Prostate gland (tissue), 2 donors: ENCODE measurements at regions of chrX and their contacts with region 1.

Region 1: DNA sequence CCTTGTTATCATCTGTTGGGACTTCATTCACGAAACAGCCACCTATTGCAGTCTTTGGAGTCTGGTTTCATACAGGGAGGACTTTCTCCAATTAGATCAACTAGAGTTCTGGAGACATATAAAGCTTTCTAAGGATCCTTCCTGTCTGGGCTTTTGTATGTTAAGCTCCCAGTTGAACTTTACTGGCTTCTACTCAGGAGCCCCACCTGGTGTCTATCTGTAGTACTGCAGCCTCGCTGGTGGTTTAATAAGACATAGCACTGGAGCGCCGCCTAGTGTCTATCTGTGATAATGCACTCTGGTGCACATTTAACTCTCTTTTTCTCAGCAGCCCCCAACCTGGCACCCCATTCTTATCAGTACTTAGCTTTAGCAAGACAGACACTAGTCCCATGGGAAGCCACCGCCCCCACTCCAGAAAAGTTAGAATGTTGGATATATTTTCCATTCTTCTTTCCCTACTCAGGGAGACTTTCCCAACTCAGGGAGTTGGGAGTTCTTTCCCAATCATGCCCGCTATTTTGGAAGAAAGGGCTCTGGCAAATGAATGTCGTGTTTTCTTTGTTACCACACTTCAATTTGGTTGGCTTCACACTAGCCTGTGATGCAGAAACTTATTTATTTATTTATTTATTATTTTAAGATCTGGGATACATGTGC is 36.9 kb upstream of the SYTL4 start:
- DNase-seq: peak; percentile 70
- H3K4me3 ChIP-seq: no peak overlapping the region
- H3K27ac ChIP-seq: no peak overlapping the region
- H3K4me1 ChIP-seq: no peaks in the 10 kb centered on the region
- H3K27me3 ChIP-seq: no peaks in the 10 kb centered on the region
- CTCF ChIP-seq: peak; percentile 81 to 99 (median 98)
- POLR2A ChIP-seq: peak; percentile 17

Region 2: GRCh38 chrX:100512471-100512870 is 256.3 kb before region 1 on chrX:
- intact Hi-C with region 1: loop called (anchors 10 kb)
- DNase-seq: no peak
- H3K4me3 ChIP-seq: no peak overlapping the region
- H3K27ac ChIP-seq: no peak overlapping the region
- H3K4me1 ChIP-seq: no peaks in the 10 kb centered on the region
- H3K27me3 ChIP-seq: no peaks in the 10 kb centered on the region
- CTCF ChIP-seq: peak in 2 of 4 experiments; percentile 42 to 55
- POLR2A ChIP-seq: no peak

Region 3: DNA sequence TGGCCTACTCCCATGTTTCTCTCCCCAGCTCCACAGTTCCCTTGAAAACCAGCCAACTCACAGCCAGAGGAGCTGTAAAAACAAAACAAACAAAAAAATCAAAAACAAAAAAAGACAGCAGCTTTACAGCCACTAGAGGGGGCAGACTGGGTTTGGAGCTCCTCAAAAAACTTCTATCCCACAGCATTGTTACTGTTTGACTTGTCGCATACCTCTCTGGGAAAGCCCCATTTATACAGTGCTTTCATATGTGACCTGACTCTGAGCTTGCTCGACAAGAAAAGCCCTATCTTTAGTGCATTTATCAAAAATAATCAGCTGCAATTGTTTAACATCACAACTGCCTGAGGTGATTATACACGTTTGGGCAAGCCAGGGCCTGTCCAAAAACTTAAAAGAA is 153.8 kb before region 1 on chrX:
- intact Hi-C with region 1: no loop called
- DNase-seq: peak; percentile 4
- H3K4me3 ChIP-seq: no peak overlapping the region
- H3K27ac ChIP-seq: no peak overlapping the region
- H3K4me1 ChIP-seq: no peaks in the 10 kb centered on the region
- H3K27me3 ChIP-seq: no peaks in the 10 kb centered on the region
- CTCF ChIP-seq: peak in 2 of 4 experiments; percentile 23 to 31
- POLR2A ChIP-seq: no peak

Region 4: DNA sequence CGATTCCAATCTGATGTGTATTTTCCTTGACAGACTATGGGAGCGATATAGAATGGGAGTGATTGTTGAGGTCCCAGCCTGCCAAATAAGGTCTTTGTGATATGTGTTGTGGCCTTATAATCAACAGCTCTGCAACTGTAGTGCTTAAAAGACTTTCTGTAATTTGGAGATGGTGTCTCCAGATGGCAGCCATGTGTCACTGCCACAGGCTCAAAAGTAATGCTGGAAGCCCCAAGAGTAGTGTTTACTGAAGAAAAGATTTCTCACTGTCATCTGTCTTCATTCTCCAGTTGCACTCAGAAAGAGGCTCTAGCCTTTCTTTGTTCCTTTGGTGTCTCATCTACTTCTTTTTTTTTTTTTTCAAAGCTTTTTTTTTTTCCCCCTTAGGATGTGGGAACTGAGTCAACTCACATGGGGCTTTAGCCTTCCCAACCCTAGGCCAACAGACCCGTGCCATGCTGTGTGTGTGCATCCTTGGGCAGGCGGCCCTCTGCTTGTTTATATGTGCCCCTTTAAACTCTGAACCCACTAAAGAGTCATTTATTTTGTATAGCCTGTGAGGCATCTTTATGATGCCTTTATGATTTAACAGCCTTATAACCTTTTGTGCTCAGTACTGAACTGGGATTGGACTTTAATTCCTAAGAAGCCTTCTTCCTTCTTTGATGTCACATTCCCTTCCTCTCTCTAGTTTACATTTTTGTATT is 109.2 kb before region 1 on chrX:
- intact Hi-C with region 1: no loop called
- DNase-seq: no peak
- H3K4me3 ChIP-seq: no peak overlapping the region
- H3K27ac ChIP-seq: peak overlapping the region; percentile 45 to 74
- H3K4me1 ChIP-seq: no peaks in the 10 kb centered on the region
- H3K27me3 ChIP-seq: no peaks in the 10 kb centered on the region
- CTCF ChIP-seq: no peak
- POLR2A ChIP-seq: no peak

Region 5: DNA sequence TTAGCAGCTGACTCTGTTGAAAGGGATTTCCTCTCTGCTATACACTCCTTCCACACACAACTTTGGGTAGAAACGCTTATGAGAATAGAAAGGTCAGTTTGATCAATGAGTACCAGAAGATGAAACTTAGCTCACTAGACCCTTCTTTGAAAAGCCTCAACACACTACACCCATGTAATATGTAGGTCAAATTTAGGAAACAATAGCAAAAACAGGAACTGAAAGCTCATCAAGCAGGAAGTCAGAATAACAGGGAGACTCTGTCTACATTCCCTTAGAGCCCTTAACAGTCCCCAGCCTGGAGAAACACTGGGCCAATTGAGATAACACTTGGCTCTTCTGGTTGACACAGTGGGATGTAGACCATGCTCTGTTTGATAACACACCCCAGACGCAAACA is 94.1 kb before region 1 on chrX:
- intact Hi-C with region 1: loop called (anchors 5 kb)
- DNase-seq: no peak
- H3K4me3 ChIP-seq: no peak overlapping the region
- H3K27ac ChIP-seq: no peak overlapping the region
- H3K4me1 ChIP-seq: no peaks in the 10 kb centered on the region
- H3K27me3 ChIP-seq: no peaks in the 10 kb centered on the region
- CTCF ChIP-seq: no peak
- POLR2A ChIP-seq: no peak

Region 6: GRCh38 chrX:100685997-100686305 is 82.9 kb before region 1 on chrX:
- intact Hi-C with region 1: loop called (anchors 1 kb)
- DNase-seq: no peak
- H3K4me3 ChIP-seq: no peak overlapping the region
- H3K27ac ChIP-seq: no peak overlapping the region
- H3K4me1 ChIP-seq: no peaks in the 10 kb centered on the region
- H3K27me3 ChIP-seq: no peaks in the 10 kb centered on the region
- CTCF ChIP-seq: no peak
- POLR2A ChIP-seq: no peak

Region 7: DNA sequence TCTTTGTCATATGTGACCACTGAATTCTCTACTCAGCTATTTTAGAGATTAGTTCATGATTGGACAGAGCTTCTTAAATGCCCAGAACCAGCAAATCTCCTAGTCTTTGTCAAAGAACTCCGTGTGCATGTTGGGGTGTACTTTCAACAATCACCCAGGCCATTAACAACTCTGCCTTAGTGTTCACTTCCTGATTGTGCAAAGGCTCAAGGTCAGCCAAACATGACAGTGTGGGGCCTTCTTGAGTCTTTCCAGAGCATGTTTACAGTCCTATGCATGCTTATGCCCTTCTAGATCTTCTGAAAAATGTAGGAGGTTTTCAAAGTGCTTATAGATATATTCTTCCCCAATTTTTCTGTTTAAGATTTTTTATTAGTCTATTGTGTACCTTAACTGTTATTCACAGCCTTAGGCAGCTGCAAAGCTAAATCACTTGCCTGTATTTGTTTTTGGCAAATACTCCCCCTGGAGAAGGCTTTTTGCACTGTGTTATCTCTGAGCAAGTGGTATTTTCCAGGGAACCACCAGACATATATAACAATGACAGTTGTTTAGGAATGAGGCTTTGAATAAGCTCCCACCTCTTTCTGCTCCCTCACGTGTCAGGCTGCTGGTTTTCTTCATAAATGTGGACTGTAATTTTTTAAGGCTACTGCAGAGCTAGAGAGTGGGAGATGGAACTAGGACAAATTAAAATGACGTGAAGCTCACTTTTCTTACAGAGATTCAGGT is 426.8 kb after region 1 on chrX:
- intact Hi-C with region 1: no loop called
- DNase-seq: no peak
- H3K4me3 ChIP-seq: no peak overlapping the region
- H3K27ac ChIP-seq: no peak overlapping the region
- H3K4me1 ChIP-seq: no peaks in the 10 kb centered on the region
- H3K27me3 ChIP-seq: no peaks in the 10 kb centered on the region
- CTCF ChIP-seq: no peak
- POLR2A ChIP-seq: no peak

Region 8: GRCh38 chrX:101337776-101338271 is 569.0 kb after region 1 on chrX:
- intact Hi-C with region 1: no loop called
- DNase-seq: no peak
- H3K4me3 ChIP-seq: no peak overlapping the region
- H3K27ac ChIP-seq: no peak overlapping the region
- H3K4me1 ChIP-seq: no peaks in the 10 kb centered on the region
- H3K27me3 ChIP-seq: no peaks in the 10 kb centered on the region
- CTCF ChIP-seq: no peak
- POLR2A ChIP-seq: no peak